HEK293T (cell line): ENCODE measurements at regions of chrX and their contacts with region 1.

Region 1: DNA sequence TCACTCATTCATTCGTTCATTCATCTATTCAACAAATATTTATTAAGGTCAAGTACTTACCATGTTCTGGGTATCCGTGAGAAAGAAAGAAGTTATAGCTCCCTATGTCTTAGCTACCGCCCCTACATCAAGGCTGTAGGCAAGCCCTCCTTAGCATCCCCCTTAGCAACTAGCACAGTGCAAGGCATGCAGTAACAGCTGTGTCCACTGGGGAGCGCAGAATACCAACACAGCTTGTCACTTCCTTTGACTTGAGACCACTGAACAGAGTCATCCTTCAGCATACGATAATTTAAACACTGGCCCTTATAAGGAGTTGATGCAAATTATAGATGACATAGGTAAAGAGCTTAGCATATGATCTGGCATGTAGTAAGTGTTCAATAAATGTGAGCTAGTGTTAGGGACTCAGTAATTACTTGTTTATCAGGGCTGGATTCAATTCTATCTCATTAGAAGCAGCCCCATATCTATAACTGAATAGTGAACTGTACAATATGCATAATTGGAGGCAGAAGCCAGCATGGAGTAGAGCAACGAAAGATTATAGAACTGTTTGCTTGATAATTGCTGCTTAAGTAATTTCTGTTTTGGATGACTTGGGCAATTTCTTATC is 8.7 kb downstream of the KIAA1210 start:
- DNase-seq: peak; percentile 85

Region 2: DNA sequence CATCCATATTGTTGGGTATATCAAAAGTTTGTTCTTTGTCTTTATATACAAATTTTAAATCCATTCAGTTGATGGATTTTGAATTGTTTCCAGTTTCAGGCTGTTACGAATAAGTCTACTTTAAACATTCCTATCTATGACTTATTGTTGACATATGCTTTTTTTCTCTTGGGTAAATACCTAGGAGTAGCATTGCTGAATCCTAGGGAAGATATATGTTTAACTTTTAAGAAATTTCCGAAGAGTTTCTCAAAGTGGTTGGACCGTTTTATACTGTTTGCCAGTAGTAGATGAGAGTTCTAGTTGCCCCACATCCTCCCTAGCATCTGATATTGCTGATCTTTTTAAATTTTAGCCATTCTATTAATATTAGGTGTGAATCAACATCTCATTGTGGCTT is 452.3 kb before region 1 on chrX:
- CTCF ChIA-PET with region 1: no interaction called
- POLR2A ChIA-PET with region 1: no interaction called
- DNase-seq: no peak

Region 3: GRCh38 chrX:119130911-119131310 is 12.0 kb after region 1 on chrX:
- CTCF ChIA-PET with region 1: interaction called, 10 read pairs
- POLR2A ChIA-PET with region 1: no interaction called
- DNase-seq: no peak

Region 4: DNA sequence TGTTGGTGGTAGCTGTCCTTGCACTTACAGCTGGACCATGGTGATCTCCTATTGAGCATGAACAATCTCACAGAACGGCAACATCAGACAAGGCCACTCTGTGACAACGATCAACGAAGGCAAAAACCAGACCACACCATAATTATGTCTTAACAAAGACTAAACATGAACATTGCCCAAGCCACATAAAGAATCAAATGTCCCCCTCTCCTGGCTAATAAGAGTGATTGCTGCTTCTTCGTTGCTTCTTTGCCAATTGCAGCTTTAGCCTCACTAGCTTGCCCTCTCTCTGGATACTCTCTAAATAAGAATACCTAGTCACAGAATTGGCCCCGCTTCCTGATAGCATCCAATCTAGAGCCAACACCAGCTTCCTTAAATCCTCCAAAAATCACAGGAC is 75.7 kb after region 1 on chrX:
- CTCF ChIA-PET with region 1: interaction called, 11 read pairs
- POLR2A ChIA-PET with region 1: no interaction called
- DNase-seq: peak; percentile 33